Naive thymus-derived CD8-positive, alpha-beta T cell (primary cell): ENCODE measurements at regions of chr7 and their contacts with region 1.

Region 1: DNA sequence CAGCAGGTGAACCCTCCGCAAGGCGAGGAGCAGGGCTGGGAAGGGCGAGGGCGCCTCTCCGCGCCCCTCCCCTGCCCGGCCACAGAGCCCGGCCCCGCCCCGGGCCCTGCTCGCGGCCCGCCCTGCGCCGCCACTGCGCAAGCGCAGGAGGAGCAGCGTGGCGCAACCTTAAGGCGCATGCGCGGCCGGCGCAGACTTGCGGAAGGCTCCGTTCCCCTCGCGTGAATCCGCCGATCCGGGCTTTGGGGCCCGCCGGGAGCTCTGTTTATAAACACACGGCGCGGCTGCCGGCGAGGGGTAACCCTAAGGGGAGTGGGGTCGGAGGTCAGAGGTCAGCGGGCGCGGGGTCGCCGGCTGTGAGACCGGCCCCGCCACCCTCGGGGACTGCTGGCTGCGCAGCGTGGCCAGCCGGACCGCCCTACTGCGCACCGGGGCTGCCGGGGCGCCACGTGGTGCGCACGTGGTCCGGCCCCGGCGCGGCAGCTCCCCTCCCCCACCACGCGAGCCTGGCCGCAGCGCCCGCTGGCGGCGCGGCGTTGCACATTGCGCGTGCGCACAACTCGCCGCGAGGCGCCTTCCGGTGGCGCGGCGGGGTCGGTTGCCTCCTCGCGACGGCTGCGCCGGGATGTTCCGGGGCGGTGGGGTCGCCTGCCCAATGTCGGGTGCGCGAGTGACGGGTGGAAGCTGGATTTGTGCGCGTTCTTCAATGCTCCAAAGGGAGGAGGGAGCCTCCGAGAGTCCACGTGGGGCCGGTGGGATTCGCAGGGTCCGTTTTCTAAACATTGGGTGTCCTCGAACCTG is 40.2 kb upstream of the FOXK1 start:
- DNase-seq: peak; percentile 88 to 100 (median 98)
- ATAC-seq: peak; percentile 81
- H3K4me3 Mint-ChIP-seq: peak overlapping the region; percentile 83 to 94 (median 91)
- H3K27ac Mint-ChIP-seq: peak overlapping the region; percentile 94 to 98 (median 96)
- H3K4me1 Mint-ChIP-seq: peaks cover 5 to 17% (median 10%) of the 10 kb centered on the region in 4 donors
- H3K27me3 Mint-ChIP-seq: no peaks in the 10 kb centered on the region

Region 2: DNA sequence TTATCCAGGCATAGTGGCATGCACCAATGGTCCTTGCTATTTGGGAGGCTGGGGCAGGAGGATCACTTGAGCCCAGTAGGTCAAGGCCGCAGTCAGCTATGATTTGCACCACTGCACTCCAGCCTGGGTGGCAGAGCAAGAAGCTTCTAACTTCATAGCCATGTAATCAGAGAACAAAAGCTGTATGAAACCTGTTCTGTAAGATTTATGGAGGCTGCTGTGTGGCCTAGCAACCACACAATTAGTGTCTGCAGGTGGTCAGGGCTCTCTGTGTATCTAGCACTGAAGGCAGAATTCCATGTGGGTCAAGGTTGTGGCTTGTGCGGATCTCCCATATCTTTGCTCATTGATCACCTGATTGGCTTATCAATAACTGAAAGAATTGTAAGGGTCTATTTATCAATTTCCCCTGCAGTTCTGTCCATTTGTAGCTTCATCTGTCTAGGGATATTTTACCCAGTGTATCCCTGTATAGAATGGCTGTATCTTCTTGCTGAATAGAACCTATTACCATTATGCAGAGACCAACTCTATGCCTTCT is 181.2 kb before region 1 on chr7:
- POLR2A ChIA-PET with region 1: no interaction called
- DNase-seq: no peak
- ATAC-seq: no peak
- H3K4me3 Mint-ChIP-seq: no peak overlapping the region
- H3K27ac Mint-ChIP-seq: no peak overlapping the region
- H3K4me1 Mint-ChIP-seq: no peaks in the 10 kb centered on the region
- H3K27me3 Mint-ChIP-seq: peaks cover 0 to 17% (median 16%) of the 10 kb centered on the region in 5 donors

Region 3: GRCh38 chr7:4513450-4513849 is 128.4 kb before region 1 on chr7:
- POLR2A ChIA-PET with region 1: no interaction called
- DNase-seq: no peak
- ATAC-seq: no peak
- H3K4me3 Mint-ChIP-seq: no peak overlapping the region
- H3K27ac Mint-ChIP-seq: no peak overlapping the region
- H3K4me1 Mint-ChIP-seq: no peaks in the 10 kb centered on the region
- H3K27me3 Mint-ChIP-seq: peaks cover 4 to 34% (median 14%) of the 10 kb centered on the region in 5 donors

Region 4: DNA sequence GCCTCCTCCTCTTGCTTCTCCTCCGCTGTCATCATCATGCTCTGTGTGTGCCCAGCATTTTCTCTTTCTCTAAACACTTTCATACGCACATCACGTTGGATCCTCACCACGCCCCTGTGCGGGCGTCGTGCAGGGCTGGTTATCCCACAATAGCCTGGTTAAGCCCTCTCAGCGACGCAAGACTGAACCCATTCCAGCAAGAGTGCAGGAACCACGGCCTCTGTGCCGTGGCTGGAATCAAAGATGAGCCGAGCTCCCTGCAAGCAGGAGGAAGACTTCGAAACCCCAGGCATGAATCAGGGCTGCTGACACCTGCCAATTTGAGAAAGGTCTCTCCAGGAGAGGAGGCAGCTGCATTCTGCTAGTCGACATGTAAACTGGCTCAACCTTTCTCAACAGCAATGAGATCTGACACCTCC is 34.5 kb before region 1 on chr7:
- POLR2A ChIA-PET with region 1: no interaction called
- DNase-seq: no peak
- ATAC-seq: no peak
- H3K4me3 Mint-ChIP-seq: no peak overlapping the region
- H3K27ac Mint-ChIP-seq: no peak overlapping the region
- H3K4me1 Mint-ChIP-seq: peaks cover 0 to 1% (median under 1%) of the 10 kb centered on the region in 4 donors
- H3K27me3 Mint-ChIP-seq: peaks cover 0 to 10% (median 4%) of the 10 kb centered on the region in 5 donors

Region 5: GRCh38 chr7:4626318-4626845 is 15.5 kb before region 1 on chr7:
- POLR2A ChIA-PET with region 1: no interaction called
- DNase-seq: no peak
- ATAC-seq: no peak
- H3K4me3 Mint-ChIP-seq: no peak overlapping the region
- H3K27ac Mint-ChIP-seq: no peak overlapping the region
- H3K4me1 Mint-ChIP-seq: peaks cover 0 to 4% (median 2%) of the 10 kb centered on the region in 4 donors
- H3K27me3 Mint-ChIP-seq: no peaks in the 10 kb centered on the region

Region 6: GRCh38 chr7:4681886-4682620 is 40.2 kb after region 1 on chr7 and contains the start of gene FOXK1:
- POLR2A ChIA-PET with region 1: interaction called, 198 read pairs
- DNase-seq: peak; percentile 64 to 88 (median 80)
- ATAC-seq: peak; percentile 80 to 81
- H3K4me3 Mint-ChIP-seq: peak within 1 kb of the TSS; percentile 86 to 99 (median 98)
- H3K27ac Mint-ChIP-seq: peak within 1 kb of the TSS; percentile 91 to 100 (median 96)
- H3K4me1 Mint-ChIP-seq: peaks cover 18 to 40% (median 32%) of the 10 kb centered on the region in 4 donors
- H3K27me3 Mint-ChIP-seq: no peaks in the 10 kb centered on the region
- polyA plus RNA-seq, gene FOXK1: 2.3 to 5.6 (median 3.6) TPM

Region 7: DNA sequence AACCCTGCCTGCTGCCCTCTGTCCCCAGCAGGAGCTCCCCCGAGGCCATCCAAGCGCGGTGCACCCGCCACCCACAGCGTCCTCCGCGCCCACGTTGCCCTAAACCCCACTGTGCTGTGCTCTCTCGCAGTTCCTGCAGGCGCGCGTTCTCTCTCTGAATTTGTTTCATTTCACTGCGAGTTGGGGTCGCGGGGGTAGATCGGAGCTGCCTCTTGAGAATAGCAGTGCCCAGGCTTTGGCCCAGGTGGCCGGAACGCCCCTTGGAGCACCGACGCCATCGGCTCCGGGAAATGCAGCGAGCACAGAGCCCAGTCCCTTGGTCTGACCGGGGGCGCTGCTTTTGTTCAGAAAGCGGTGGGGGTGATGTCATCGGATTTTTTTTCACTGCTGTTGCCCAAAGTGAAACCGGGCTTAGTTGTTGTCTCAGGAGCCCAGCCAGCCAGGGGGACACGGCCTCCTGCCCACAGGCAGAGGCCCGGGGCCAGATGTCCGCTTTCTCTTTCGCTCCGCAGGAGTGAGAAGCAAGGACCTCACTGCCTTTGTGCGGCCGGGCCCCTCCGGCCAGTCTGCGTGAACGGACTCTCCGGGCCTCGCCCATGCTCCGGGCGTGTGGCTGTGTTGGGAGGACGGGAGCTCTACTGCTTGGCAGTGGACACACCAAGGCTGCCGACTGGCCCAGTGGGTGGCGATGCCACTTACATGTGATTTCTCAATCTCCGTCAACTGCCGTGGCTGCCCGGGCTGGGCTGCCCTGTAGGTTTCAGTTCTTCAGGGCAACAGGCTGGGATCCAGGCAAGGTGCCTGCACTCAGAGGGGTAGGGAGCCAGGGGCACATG is 83.4 kb after region 1 on chr7:
- POLR2A ChIA-PET with region 1: interaction called, 24 read pairs
- DNase-seq: peak; percentile 41 to 81 (median 67)
- ATAC-seq: peak; percentile 83 to 85
- H3K4me3 Mint-ChIP-seq: peak overlapping the region; percentile 82 to 97 (median 93)
- H3K27ac Mint-ChIP-seq: peak overlapping the region; percentile 93 to 99 (median 98)
- H3K4me1 Mint-ChIP-seq: peaks cover 24 to 75% (median 63%) of the 10 kb centered on the region in 4 donors
- H3K27me3 Mint-ChIP-seq: no peaks in the 10 kb centered on the region

Region 8: GRCh38 chr7:4744391-4745264 is 102.8 kb after region 1 on chr7:
- POLR2A ChIA-PET with region 1: interaction called, 41 read pairs
- DNase-seq: peak; percentile 57 to 85 (median 72)
- ATAC-seq: peak; percentile 74 to 81
- H3K4me3 Mint-ChIP-seq: peak overlapping the region; percentile 71 to 93 (median 84)
- H3K27ac Mint-ChIP-seq: peak overlapping the region; percentile 84 to 99 (median 97)
- H3K4me1 Mint-ChIP-seq: peaks cover 41 to 81% (median 79%) of the 10 kb centered on the region in 4 donors
- H3K27me3 Mint-ChIP-seq: no peaks in the 10 kb centered on the region

Region 9: DNA sequence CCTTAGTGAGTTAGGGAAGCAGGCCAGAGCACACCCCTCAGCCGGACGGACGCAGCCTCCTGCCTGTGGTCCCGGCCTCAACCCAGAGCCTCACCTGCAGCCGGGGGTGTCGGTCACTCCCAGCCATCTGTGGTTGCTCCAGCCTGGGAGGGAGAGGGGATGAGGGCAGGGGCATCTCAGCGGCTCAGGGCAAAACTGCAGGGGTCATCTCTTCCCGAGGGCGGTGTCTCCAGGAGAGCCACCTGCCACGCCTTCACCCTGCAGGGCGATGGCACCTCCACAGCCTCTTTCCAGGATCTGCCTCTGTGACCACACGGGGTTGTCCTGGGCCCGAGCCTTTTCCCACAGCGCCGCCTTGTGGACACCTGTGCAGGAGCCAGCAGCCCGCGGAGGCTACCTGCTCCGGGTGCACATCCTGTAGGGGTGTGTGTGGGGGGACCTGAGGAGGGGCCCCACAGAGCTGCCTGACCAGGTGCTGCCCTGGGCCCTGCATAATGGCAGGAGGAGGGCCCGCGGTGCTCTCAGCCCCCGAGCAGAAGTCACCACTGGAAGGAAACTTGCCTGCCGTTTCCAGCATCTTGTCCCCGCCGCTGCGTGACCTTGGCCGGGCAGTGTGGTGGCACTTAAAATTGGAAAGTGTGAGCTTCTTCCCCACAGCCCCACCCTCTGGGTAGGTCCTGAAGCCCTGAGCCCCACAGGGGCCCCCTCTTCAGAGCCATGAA is 112.0 kb after region 1 on chr7:
- POLR2A ChIA-PET with region 1: interaction called, 17 read pairs
- DNase-seq: peak; percentile 71 to 91 (median 84)
- ATAC-seq: peak; percentile 99
- H3K4me3 Mint-ChIP-seq: peak overlapping the region in 3 of 10 donors; percentile 12 to 49 (median 36)
- H3K27ac Mint-ChIP-seq: peak overlapping the region in 7 of 10 donors; percentile 52 to 87 (median 79)
- H3K4me1 Mint-ChIP-seq: peaks cover 5 to 32% (median 20%) of the 10 kb centered on the region in 4 donors
- H3K27me3 Mint-ChIP-seq: no peaks in the 10 kb centered on the region